ENCODE measurements at regions of chr19 and their contacts with region 1.

Region 1: DNA sequence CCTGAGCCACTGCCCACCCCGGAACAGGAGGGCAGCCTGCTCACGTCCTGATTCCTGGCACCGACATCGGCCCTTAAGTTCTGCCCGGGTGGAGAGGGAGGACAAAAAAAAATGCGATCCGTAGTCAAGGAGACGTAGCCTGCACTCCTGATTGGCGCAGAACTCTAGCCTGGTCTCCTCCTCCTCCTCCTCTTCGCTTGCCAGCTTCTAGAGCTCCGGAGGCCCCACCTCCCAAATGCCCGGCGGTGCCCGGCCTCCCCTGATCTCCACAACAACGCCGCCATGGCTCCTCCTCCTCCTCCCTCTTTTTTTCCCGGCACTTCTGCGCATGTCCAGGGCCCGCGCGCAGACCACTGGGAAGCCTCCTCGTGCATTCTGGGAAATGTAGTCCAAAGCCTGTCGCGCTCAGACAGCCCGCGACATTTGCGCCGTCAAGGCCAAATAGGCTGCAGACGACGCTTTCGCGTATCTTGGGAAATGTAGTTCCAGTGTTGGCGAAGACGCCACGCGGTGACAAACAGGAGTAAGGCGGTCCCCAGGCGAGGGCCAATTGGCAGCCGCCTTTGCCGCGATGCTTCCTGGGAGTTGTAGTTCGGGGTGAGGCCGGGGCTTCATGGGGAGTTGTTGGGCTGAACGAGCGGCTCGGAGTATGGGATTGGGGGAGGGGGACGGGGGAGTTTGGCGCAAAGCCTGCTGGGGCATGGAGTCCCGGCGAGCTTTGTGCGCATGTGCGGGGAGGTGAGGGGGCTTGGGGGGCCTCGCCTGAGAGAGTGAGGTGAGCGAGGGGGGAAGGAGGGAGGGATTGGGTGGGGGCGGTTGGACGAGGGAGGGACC is at the start of gene ZNF444:
- DNase-seq: peak; percentile 100
- total RNA-seq, gene ZNF444: 22.9 TPM

Region 2: GRCh38 chr19:56090931-56091490 is 49.8 kb before region 1 on chr19:
- intact Hi-C with region 1: no loop called
- DNase-seq: no peak

Region 3: DNA sequence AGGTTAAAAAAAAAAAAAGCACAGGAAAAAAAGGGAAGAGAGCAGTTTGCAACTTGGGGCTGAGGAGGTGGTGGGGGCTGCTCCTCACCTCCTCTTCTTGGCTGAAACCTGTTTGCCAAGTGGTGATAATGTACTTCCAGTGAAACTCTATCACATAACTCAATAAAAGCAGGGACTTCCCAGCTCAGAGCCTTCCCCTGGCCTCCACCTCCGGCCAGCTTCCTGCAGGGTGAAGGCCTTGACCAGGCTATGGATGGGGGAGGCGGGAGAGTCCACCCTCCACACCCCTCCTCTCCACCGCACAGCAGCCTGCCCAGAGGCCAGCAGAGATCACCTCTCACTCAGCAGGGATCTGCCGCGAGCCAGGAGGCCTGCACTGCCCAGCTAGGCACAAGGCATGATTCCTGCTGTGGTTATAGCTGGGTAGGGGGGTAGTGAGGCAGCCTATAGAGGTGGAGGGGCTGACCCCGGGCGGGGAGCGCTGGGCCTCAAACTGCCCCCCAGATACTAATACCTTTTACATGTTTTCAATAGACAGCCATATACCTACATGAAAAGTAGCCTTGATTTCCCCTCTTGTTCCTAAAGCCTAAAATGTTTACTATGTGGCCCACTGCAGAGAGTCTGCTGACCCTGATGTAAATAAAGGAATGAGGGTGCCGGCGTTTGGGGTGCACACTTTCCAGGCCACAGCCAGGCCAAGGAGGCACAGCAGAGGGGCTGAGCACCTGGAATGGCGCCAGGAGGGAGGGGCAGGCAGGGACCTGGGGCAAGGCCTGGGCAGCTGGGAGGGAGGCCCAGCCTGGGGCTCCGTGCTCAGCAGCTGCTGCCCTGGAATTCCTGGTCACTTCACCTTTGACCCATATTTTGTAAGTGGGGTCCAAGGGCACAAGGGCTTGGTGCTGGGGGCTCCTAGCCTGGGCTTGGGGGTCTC is 30.0 kb before region 1 on chr19:
- intact Hi-C with region 1: no loop called
- DNase-seq: peak; percentile 83

Region 4: GRCh38 chr19:56121180-56122167 is 19.3 kb before region 1 on chr19 and contains the start of gene ZNF787:
- intact Hi-C with region 1: loop called (anchors 1 kb)
- DNase-seq: peak; percentile 99
- total RNA-seq, gene ZNF787: 29.5 TPM

Region 5: DNA sequence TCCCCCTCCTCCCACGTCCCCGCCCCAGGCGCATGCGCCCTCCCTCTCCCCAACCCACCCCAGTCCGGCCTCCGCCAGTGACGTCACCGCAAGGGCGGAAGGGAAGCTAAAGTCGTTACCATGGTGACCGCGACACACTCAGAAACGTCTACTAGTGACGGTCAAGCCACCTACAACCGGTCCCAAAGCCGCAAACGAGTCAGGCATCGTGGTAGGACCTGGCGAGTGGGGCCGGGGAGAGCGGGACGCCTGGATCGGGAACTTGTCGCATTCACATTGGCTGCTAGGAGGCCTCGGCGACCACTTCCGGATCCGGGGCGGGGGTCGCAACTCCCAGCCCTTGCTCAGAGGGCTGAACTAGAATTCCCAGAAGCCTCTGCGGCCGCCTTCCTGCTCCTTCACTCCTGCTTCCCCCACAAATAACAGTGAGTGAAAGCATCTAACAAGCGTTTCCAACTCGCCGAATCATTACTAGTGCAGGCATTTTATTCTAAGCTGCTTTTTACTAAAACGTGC is 173.8 kb after region 1 on chr19 and contains the start of gene ZSCAN5A:
- intact Hi-C with region 1: loop called (anchors 10 kb)
- DNase-seq: peak; percentile 99
- total RNA-seq, gene ZSCAN5A: 24.4 TPM

Measured in cardiac septum (tissue), 1 donor.